Heart left ventricle (tissue), 16 donors: ENCODE measurements at regions of chr1 and their contacts with region 1.

Region 1: GRCh38 chr1:112925015-112925414 is 31.0 kb downstream of the SLC16A1 start:
- DNase-seq: no peak
- ATAC-seq: no peak
- H3K4me3 ChIP-seq: no peak overlapping the region
- H3K27ac ChIP-seq: no peak overlapping the region
- H3K4me1 ChIP-seq: peaks cover 0 to 35% (median 11%) of the 10 kb centered on the region in 12 donors
- H3K27me3 ChIP-seq: no peaks in the 10 kb centered on the region
- CTCF ChIP-seq: no peak
- POLR2A ChIP-seq: no peak

Region 2: DNA sequence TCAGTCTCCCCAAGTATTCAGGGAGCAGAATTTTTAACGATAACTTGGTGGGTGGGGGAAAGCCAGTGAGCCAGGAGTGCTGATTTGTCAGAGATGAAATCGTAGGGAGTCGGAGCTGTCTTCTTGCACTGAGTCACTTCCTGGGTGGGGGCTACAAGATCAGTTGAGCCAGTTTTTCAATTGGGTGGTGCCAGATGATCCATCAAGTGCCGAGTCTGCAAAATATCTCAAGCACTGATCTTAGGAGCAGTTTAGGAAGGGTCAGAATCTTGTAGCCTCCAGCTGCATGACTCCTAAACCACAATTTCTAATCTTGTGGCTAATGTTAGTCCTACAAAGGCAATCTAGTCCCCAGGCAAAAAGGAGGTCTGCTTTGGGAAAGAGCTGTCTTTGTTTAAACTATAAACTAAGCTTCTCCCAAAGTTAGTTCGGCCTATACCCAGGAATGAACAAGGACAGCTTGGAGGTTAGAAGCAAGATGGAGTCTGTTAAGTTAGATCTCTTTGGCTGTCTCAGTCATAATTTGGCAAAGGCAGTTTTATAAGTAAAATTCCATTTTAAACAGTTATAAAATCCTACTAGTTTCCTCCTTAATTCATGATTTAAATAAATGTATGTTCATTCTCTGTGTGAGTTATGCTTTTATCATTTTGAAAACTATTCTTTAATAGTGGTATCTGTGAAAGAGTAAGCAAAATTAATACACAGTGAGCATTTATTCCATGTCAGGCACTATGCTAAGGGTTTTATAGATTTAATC is 20.8 kb before region 1 on chr1:
- intact Hi-C with region 1: loop called in 1 of 10 experiments (anchors 1 kb)
- DNase-seq: no peak
- ATAC-seq: peak in 1 of 4 donors; percentile 46
- H3K4me3 ChIP-seq: no peak overlapping the region
- H3K27ac ChIP-seq: peak overlapping the region in 9 of 12 donors; percentile 14 to 84 (median 65)
- H3K4me1 ChIP-seq: peaks cover 4 to 37% (median 32%) of the 10 kb centered on the region in 12 donors
- H3K27me3 ChIP-seq: no peaks in the 10 kb centered on the region
- CTCF ChIP-seq: no peak
- POLR2A ChIP-seq: no peak